ENCODE measurements at regions of chr19 and their contacts with region 1.

Region 1: DNA sequence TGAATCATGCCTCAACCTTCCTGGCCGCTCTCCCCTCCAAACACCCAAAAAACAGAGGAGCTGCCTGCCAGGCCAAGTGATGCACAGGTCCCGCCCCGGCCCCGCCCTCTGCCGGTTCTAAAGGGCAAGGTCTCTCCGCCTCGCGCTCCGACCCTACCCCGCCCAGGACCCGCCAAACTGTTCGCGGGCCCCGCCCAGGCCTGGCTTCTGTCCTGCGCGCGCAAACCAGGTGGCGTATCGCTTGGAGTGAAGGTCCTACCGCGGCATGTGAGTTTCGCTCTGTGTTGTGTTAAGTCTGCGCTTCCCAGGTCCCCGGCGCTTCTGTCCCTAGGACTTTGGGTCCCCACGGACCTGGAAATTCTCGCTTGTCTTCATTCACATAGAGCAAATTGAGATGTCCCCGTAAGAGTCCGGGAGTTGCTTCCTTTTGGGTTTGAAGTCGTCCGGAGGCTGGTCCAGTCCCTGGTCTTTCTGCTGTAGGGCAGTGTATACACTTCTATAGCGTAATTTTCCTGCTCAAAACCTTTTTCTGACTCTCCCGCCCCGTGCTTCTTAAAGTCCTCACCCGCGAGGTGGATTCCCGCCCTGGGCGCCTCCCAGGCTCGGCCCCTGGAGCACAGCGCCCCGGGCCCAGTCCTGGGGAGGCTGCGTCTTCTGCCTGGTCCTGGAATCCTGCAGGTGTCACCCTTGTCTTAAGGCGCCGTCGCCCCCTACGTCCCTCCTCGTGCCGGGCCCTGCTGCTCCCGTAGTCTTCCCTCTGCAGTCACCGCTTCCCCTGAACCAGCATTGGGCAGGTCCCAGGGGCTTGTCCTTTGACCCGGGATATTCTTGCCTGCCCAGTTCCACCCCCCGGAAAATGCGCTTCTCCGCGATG is 34.6 kb upstream of the ZNF808 start:
- DNase-seq: no peak
- H3K4me3 ChIP-seq: peak overlapping the region in 1 of 4 donors; percentile 11
- H3K27ac ChIP-seq: no peak overlapping the region
- H3K4me1 ChIP-seq: no peaks in the 10 kb centered on the region
- H3K27me3 ChIP-seq: no peaks in the 10 kb centered on the region
- CTCF ChIP-seq: no peak
- POLR2A ChIP-seq: no peak

Region 2: DNA sequence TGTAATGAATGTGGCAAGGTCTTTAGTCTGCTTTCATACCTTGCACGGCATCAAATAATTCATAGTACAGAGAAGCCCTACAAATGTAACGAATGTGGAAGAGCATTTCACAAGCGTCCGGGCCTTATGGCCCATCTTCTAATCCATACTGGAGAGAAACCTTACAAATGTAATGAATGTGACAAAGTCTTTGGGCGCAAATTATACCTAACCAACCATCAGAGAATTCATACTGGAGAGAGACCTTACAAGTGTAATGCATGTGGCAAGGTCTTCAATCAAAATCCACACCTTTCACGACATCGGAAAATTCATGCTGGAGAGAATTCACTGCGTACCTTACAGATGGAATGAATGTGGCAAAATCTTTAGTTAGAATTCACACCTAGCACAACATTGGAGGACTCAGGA is 126.4 kb before region 1 on chr19:
- intact Hi-C with region 1: no loop called
- DNase-seq: no peak
- H3K4me3 ChIP-seq: no peak overlapping the region
- H3K27ac ChIP-seq: no peak overlapping the region
- H3K4me1 ChIP-seq: peaks cover 5% of the 10 kb centered on the region in 2 donors
- H3K27me3 ChIP-seq: no peaks in the 10 kb centered on the region
- CTCF ChIP-seq: no peak
- POLR2A ChIP-seq: no peak

Region 3: DNA sequence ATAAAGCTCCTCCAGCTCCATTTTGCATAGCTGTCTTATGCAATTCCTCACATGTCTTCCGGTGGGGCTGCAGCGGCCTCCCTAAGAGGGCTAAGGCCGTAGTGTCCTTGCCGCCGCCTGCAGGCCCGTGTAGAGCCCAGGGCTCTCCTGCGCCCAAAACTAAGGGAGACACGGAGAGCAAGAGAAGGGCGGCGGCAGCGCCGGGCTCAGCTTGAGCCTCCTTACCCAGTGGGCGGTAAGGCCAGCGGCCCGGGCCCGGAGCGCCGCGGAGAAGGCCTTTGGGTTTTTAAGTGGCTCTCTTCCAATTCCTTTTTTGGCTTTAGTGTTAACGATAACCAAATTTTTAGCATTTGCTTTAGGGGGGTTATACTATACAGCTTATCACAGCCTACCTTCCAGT is 731.8 kb after region 1 on chr19:
- intact Hi-C with region 1: loop called in 1 of 2 experiments (anchors 10 kb)
- DNase-seq: no peak
- H3K4me3 ChIP-seq: no peak overlapping the region
- H3K27ac ChIP-seq: no peak overlapping the region
- H3K4me1 ChIP-seq: no peaks in the 10 kb centered on the region
- H3K27me3 ChIP-seq: no peaks in the 10 kb centered on the region
- CTCF ChIP-seq: no peak
- POLR2A ChIP-seq: no peak

Measured in adrenal gland (tissue), 19 donors.